Esophagus squamous epithelium (tissue), 5 donors: ENCODE measurements at regions of chr1 and their contacts with region 1.

Region 1: GRCh38 chr1:147591261-147591891 is 50.1 kb downstream of the BCL9 start:
- DNase-seq: no peak
- H3K4me3 ChIP-seq: no peak overlapping the region
- H3K27ac ChIP-seq: no peak overlapping the region
- H3K4me1 ChIP-seq: no peaks in the 10 kb centered on the region
- H3K27me3 ChIP-seq: no peaks in the 10 kb centered on the region
- CTCF ChIP-seq: no peak
- POLR2A ChIP-seq: no peak

Region 2: DNA sequence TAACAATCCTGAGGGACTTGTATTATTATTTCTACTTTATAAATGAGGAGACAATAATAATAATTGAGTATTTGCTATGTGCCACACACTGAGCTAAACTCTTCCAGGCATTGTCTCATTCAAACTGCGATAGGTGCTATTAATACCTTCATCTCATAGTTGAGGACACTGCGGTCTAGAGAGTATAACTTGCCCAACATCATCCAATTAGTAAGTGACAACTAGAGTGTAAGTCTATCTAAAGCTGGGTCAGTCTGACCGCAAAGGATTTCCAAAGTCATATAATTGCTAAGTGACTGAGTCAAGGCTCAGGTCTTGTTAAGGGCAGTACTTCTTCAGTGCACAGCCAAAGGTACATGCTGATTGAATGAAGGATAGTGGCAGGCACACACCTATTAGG is 40.3 kb before region 1 on chr1:
- intact Hi-C with region 1: loop called (anchors 5 kb)
- DNase-seq: no peak
- H3K4me3 ChIP-seq: no peak overlapping the region
- H3K27ac ChIP-seq: no peak overlapping the region
- H3K4me1 ChIP-seq: peaks cover 0 to 7% (median 0%) of the 10 kb centered on the region in 3 donors
- H3K27me3 ChIP-seq: no peaks in the 10 kb centered on the region
- CTCF ChIP-seq: no peak
- POLR2A ChIP-seq: no peak